WTC11 (cell line): ENCODE measurements at regions of chr6 and their contacts with region 1.

Region 1: DNA sequence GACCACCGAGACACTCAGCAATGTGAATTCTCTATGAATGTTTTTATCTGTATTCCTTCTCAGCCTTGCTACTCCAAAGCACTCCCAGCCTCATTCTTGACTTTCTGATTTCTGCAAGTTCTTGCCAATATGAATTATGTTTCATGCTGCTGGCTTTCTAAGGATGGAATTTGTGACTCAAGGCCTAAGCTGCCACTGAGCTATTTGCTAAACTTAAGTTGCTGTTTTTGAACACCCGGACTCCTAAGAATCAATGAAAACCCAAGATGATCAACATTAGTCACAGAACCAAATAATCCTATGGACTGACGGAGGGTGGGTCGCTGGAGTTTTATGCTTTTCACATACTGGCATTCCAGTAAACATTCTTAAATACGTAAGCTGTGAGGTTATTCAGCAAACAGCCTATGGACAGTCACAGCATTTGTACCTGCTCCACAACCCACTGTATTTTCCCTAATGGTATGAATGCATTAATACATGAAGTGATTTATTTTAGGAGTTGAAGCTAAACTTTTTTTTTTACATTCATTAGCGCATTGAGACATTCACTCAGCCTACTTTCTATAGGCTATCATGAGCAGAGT is 8.2 kb upstream of the PXDC1 start:
- DNase-seq: no peak
- ATAC-seq: no peak
- H3K4me3 Mint-ChIP-seq: no peak overlapping the region
- H3K27ac Mint-ChIP-seq: no peak overlapping the region; the same call in 1 of the 2 replicates
- H3K4me1 Mint-ChIP-seq: peaks cover 26% of the 10 kb centered on the region
- H3K27me3 Mint-ChIP-seq: peaks cover 7% of the 10 kb centered on the region
- CTCF ChIP-seq: no peak

Region 2: DNA sequence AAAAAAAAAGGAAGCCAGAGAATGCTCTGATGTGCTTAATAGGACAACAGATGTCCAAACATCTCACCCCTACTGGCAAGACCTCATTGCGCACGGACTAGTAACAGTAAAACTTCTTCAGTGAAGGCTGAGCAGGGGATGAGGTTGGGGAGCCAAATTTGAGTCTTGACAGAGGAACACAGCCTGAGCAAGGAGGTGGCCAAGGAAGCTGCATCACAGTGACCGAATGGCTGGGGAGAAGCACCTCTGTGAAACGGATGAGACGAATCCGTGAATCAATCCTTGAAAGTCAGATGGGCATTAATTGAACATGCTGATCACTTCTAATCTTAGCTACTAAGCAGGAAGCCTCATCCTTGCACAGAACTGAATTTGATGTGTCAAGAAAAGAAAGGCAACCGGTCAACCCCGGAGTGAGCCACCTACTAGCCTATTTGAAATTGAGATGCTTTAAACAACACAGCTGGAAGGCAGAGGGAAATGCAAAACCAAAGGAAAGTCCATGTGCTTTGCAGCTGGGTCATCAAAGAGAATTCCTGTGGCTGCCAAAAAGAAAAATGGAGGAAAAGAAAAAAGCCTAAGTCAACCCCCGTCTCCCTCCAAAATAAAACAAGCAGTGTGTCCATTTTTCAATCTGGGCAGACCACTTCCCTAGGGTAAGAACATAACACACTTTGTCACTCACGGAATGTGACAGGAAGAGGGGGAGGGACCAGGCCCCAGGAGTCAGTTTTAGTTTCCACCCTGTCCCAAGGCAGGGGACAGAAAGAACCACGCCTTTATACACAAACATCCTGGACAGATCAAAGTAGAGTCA is 37.7 kb before region 1 on chr6:
- CTCF ChIA-PET with region 1: no interaction called
- POLR2A ChIA-PET with region 1: no interaction called
- DNase-seq: no peak
- ATAC-seq: peak; percentile 47
- H3K4me3 Mint-ChIP-seq: peak overlapping the region; percentile 2; the same call in 1 of the 2 replicates
- H3K27ac Mint-ChIP-seq: no peak overlapping the region
- H3K4me1 Mint-ChIP-seq: peaks cover 27% of the 10 kb centered on the region
- H3K27me3 Mint-ChIP-seq: no peaks in the 10 kb centered on the region
- CTCF ChIP-seq: no peak

Region 3: GRCh38 chr6:3742426-3743344 is 17.1 kb before region 1 on chr6:
- CTCF ChIA-PET with region 1: interaction called, 14 read pairs
- POLR2A ChIA-PET with region 1: no interaction called
- DNase-seq: peak; percentile 93
- ATAC-seq: peak; percentile 74
- H3K4me3 Mint-ChIP-seq: no peak overlapping the region; the same call in 1 of the 2 replicates
- H3K27ac Mint-ChIP-seq: no peak overlapping the region
- H3K4me1 Mint-ChIP-seq: peaks cover 41% of the 10 kb centered on the region
- H3K27me3 Mint-ChIP-seq: peaks cover 11% of the 10 kb centered on the region
- CTCF ChIP-seq: peak; percentile 95

Region 4: GRCh38 chr6:3782876-3783832 is 23.4 kb after region 1 on chr6:
- CTCF ChIA-PET with region 1: no interaction called
- POLR2A ChIA-PET with region 1: no interaction called
- DNase-seq: no peak
- ATAC-seq: no peak
- H3K4me3 Mint-ChIP-seq: no peak overlapping the region
- H3K27ac Mint-ChIP-seq: no peak overlapping the region
- H3K4me1 Mint-ChIP-seq: no peaks in the 10 kb centered on the region
- H3K27me3 Mint-ChIP-seq: no peaks in the 10 kb centered on the region
- CTCF ChIP-seq: no peak